Right cardiac atrium (tissue), 5 donors: ENCODE measurements at regions of chr4 and their contacts with region 1.

Region 1: DNA sequence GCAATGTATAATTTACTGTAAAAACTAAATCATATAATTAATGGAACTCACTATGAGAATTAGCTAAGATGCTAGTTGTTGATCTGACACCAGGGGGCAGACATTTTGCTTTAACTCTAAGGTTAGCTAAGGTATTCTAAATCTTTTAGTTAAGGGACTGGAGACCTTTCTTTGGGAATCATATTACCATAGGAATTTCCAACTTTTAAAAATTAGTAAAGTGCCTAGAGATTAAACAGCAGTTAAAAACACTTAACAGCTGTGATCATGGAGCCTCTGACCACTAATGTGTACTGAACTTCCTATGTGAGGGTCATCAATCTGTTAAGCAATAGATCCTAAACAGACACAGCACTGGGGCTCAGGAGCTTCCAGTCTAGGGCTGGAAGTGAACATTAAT is 226.6 kb downstream of the NSUN7 start:
- DNase-seq: no peak
- ATAC-seq: peak; percentile 33 to 52
- H3K4me3 ChIP-seq: no peak overlapping the region
- H3K27ac ChIP-seq: no peak overlapping the region
- H3K4me1 ChIP-seq: peaks cover 1% of the 10 kb centered on the region
- H3K27me3 ChIP-seq: no peaks in the 10 kb centered on the region

Region 2: DNA sequence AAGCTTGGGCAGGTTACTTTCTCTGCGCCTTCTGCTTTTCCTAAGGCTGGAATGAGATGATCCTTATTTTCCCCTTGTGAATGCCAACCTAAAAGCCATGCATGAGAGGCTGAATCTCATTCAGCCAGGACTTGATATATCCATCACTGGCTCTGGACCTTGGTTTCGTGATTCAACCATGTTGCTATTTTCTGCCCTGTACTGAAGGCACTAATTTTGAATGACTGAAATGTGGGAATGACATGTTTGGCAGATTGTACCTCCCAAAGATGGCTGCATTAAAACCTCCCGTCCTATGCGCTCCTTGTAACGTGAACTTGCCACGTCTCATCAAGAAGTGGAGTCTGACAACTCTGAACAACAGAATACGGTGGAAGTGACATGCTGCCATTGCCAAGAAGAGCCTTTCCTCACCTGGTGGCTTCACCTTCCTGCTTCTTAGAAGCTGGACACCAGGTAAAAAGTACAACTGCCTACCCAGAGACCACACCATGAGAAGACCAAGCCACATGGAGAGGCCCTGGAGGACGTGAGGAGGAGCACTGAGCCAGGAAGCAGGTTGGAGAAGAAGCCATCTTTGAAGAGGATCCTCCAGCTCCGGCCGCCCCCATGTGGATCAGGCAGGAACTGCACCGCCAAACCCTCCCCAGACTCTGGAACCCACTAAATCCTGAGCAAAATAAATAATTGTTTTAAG is 52.1 kb before region 1 on chr4:
- intact Hi-C with region 1: loop called in 1 of 4 experiments (anchors 10 kb)
- DNase-seq: peak; percentile 59 to 85 (median 84)
- ATAC-seq: peak; percentile 57 to 66
- H3K4me3 ChIP-seq: no peak overlapping the region
- H3K27ac ChIP-seq: peak overlapping the region; percentile 13
- H3K4me1 ChIP-seq: peaks cover 5% of the 10 kb centered on the region
- H3K27me3 ChIP-seq: no peaks in the 10 kb centered on the region

Region 3: GRCh38 chr4:41044165-41044564 is 67.8 kb after region 1 on chr4:
- intact Hi-C with region 1: loop called in 1 of 4 experiments (anchors 10 kb)
- DNase-seq: no peak
- ATAC-seq: no peak
- H3K4me3 ChIP-seq: no peak overlapping the region
- H3K27ac ChIP-seq: no peak overlapping the region
- H3K4me1 ChIP-seq: no peaks in the 10 kb centered on the region
- H3K27me3 ChIP-seq: no peaks in the 10 kb centered on the region

Region 4: GRCh38 chr4:41095973-41096372 is 119.6 kb after region 1 on chr4:
- intact Hi-C with region 1: no loop called
- DNase-seq: no peak
- ATAC-seq: no peak
- H3K4me3 ChIP-seq: no peak overlapping the region
- H3K27ac ChIP-seq: no peak overlapping the region
- H3K4me1 ChIP-seq: peaks cover 3% of the 10 kb centered on the region
- H3K27me3 ChIP-seq: no peaks in the 10 kb centered on the region

Region 5: GRCh38 chr4:41307638-41308037 is 331.3 kb after region 1 on chr4:
- intact Hi-C with region 1: no loop called
- DNase-seq: no peak
- ATAC-seq: peak; percentile 63 to 84
- H3K4me3 ChIP-seq: no peak overlapping the region
- H3K27ac ChIP-seq: no peak overlapping the region
- H3K4me1 ChIP-seq: peaks cover 2% of the 10 kb centered on the region
- H3K27me3 ChIP-seq: no peaks in the 10 kb centered on the region